ENCODE measurements at regions of chr11 and their contacts with region 1.

Region 1: GRCh38 chr11:59668950-59669610 is at the start of gene PATL1:
- DNase-seq: peak; percentile 96 to 100 (median 99)

Region 2: DNA sequence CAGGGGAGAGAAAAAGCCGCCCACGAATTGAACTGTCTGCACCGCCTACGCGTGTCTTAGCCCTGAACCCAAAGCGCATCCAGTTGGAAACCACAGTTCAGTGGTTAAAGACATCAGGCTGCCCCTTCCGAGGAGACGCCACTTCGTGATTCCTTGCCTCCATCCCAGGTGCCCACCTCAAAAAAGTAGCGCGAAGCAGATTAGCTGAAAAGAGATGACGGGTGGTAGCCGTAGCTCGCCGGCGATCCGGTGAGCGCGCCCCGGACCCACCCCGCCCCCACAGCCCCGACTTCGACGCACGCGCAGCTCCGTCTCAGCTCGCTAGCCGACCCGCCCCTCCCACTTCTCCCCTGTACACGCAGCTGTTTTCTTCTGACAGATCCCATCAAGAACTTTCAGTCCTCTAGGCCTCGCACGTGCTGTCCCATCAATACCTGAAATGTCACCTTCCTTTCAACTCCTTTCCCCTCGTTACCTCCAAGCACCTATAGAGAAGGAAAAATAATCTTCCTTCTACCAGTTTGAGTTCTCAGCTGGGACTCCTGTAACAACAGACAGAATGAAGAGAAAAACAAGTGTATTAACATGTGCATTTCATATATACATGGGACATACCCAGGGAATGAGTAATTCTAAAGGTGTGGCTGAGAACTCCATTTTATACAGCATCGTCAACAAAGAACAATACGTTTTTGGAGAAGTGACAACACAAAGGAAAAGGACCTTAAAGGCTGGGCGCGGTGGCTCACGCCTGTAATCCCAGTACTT is 108.2 kb before region 1 on chr11:
- intact Hi-C with region 1: loop called (anchors 5 kb)
- DNase-seq: peak; percentile 56 to 92 (median 81)

Region 3: DNA sequence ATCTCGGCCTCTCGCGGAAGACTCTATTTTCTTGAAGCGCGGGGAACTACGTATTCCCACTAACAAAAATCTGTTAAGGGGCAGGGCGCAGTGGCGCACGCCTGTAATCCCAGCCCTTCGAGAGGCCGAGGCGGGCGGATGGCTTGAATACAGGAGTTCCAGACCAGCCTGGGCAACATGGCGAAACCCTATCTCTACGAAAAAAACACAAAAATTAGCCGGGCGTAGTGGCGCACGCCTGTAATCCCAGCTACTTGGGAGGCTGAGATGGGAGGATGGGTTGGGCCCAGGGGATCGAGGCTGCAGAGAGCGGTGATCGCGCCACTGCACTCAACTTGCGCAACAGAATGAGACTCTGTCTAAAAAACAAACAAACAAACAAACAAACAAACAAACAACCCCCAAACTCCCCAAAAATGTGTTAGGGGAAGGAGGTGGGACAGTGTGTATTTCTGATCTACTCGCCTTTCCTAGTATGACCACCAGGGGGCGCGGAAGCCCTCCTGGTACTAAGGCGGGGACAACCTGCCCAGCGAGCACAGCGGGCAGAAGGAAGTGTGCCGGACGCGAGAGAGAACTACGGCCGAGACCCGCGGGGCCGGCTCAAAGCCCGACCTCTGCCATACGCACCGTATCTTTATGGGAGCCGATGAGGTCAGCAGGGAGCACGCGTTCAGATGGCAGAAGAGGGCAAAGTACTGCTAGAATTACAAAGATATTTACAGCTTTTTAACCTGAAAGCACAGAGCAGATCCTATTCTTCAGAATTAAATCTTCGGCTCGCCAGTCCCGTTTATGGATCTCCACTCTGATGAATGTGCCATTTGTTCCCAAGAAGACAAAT is 84.8 kb after region 1 on chr11:
- intact Hi-C with region 1: loop called (anchors 5 kb)
- DNase-seq: peak; percentile 78 to 97 (median 90)

Measured in head of caudate nucleus (tissue), 42 donors.